ENCODE measurements at regions of chr5 and their contacts with region 1.

Region 1: GRCh38 chr5:96997265-96997859 is 61.5 kb downstream of the LNPEP start:
- DNase-seq: peak; percentile 32
- ATAC-seq: peak; percentile 82
- H3K4me3 ChIP-seq: no peak overlapping the region
- H3K27ac ChIP-seq: no peak overlapping the region
- H3K4me1 ChIP-seq: no peaks in the 10 kb centered on the region
- H3K27me3 ChIP-seq: no peaks in the 10 kb centered on the region
- CTCF ChIP-seq: peak; percentile 27 to 54 (median 39); a peak in 5 of 6 replicates
- POLR2A ChIP-seq: no peak
- RAD21 ChIP-seq: peak; percentile 49

Region 2: DNA sequence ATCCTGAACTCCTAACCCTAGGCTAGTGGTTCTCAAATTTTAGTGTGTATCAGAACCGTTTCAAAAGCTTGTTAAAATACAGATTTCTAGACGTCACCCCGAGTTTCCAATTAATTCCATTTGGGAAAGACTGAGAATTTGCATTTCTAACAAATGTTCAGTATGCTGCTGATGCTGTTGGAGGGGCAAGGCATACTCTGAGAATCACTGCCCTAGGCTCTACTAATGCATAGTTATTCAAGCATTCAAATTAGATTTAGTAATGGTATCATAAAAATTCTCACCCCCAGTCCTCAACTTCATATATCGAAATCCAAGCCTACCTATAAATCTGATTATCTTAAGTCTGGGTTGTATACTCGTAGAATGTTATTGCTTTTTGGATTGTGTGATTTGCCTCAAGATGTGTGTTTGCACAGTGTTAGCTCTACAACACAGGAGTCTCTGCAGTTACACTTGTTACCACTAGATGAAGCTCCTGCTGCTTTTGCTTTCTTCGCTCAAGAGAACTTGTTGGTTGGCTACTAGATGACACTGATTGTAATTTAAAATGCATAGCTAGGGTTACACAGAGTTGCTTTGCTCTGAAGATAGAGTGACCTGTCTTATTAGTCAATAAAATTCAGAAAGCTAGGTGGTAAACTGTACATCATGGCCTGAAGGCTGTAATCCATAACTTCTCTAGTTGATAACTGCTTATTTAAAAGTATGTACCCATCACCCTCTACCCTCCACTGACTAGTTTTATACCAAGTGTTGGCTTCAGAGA is 128.6 kb before region 1 on chr5:
- CTCF ChIA-PET with region 1: interaction called, 8 read pairs
- POLR2A ChIA-PET with region 1: no interaction called
- RAD21 ChIA-PET with region 1: interaction called, 4 to 5 read pairs
- intact Hi-C with region 1: loop called (anchors 5 kb)
- DNase-seq: peak; percentile 57
- ATAC-seq: peak; percentile 97
- H3K4me3 ChIP-seq: no peak overlapping the region
- H3K27ac ChIP-seq: no peak overlapping the region
- H3K4me1 ChIP-seq: no peaks in the 10 kb centered on the region
- H3K27me3 ChIP-seq: no peaks in the 10 kb centered on the region
- CTCF ChIP-seq: peak; percentile 76 to 95 (median 92)
- POLR2A ChIP-seq: no peak
- RAD21 ChIP-seq: peak; percentile 91

Region 3: GRCh38 chr5:96978812-96979449 is 18.4 kb before region 1 on chr5:
- CTCF ChIA-PET with region 1: interaction called, 11 read pairs
- POLR2A ChIA-PET with region 1: no interaction called
- RAD21 ChIA-PET with region 1: no interaction called
- intact Hi-C with region 1: no loop called
- DNase-seq: no peak
- ATAC-seq: no peak
- H3K4me3 ChIP-seq: no peak overlapping the region
- H3K27ac ChIP-seq: no peak overlapping the region
- H3K4me1 ChIP-seq: no peaks in the 10 kb centered on the region
- H3K27me3 ChIP-seq: no peaks in the 10 kb centered on the region
- CTCF ChIP-seq: no peak
- POLR2A ChIP-seq: no peak
- RAD21 ChIP-seq: no peak

Region 4: DNA sequence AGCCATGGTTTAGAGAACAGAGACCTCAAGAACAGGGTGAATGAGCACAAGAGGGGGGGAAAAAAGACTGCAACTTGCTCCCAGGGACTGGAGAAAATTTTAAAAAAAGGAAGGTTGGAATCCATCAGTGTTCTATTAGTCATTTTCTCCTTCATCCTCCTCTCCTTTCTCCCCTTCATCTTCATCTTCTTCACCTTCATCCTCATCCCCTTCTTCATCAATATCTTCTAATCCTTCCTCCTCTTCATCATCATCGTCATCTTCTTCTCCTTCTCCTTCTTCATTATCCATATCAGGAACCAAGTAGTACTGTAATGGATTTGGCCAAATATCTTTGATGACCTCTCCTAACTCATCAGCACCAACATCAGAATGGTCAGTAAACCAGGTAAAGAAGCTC is 58.9 kb after region 1 on chr5:
- CTCF ChIA-PET with region 1: no interaction called
- POLR2A ChIA-PET with region 1: no interaction called
- RAD21 ChIA-PET with region 1: no interaction called
- intact Hi-C with region 1: no loop called
- DNase-seq: no peak
- ATAC-seq: no peak
- H3K4me3 ChIP-seq: no peak overlapping the region
- H3K27ac ChIP-seq: no peak overlapping the region
- H3K4me1 ChIP-seq: no peaks in the 10 kb centered on the region
- H3K27me3 ChIP-seq: no peaks in the 10 kb centered on the region
- CTCF ChIP-seq: no peak
- POLR2A ChIP-seq: no peak
- RAD21 ChIP-seq: no peak

Region 5: DNA sequence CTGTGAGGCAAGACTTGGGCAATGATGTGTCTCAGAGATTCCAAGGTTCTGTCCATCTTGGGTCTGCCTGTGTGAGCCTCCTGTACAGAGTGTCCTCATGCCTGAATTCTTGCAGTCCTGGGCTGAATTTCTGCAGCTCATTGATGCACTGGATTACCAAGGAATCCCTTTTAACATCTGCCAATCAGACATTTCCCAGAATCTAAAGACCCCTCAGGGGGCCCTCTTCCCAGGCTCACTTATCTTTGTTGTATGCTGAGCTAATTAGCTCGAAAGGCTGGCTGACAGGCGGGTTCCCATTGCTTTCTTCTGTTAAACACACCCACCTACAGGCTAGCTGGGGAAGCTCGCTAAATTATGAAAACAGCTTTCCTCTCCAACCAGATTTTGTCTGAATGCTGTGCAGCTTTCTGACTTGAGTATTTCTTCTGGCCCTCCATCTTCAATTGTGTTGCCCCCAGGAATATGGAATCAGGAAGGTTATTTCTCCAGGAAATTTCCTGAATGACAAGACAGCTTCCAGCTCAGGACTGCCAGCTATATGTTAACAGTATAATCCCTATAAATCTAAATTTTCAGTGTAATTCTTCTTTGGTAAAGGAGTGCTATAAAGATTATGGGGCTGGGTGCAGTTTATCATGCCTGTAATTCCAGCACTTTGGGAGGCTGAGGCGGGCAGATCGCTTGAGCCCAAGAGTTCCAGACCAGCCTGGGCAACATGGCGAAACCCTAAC is 145.3 kb after region 1 on chr5 and contains the start of gene LIX1:
- CTCF ChIA-PET with region 1: interaction called, 35 read pairs
- POLR2A ChIA-PET with region 1: no interaction called
- RAD21 ChIA-PET with region 1: interaction called, 3 to 5 read pairs
- intact Hi-C with region 1: loop called (anchors 5 kb)
- DNase-seq: no peak
- ATAC-seq: peak; percentile 90
- H3K4me3 ChIP-seq: no peak within 1 kb of the TSS
- H3K27ac ChIP-seq: no peak within 1 kb of the TSS
- H3K4me1 ChIP-seq: no peaks in the 10 kb centered on the region
- H3K27me3 ChIP-seq: no peaks in the 10 kb centered on the region
- CTCF ChIP-seq: peak; percentile 55 to 66 (median 63); a peak in 5 of 6 replicates
- POLR2A ChIP-seq: no peak
- RAD21 ChIP-seq: peak; percentile 81
- total RNA-seq, gene LIX1: not detected

Region 6: DNA sequence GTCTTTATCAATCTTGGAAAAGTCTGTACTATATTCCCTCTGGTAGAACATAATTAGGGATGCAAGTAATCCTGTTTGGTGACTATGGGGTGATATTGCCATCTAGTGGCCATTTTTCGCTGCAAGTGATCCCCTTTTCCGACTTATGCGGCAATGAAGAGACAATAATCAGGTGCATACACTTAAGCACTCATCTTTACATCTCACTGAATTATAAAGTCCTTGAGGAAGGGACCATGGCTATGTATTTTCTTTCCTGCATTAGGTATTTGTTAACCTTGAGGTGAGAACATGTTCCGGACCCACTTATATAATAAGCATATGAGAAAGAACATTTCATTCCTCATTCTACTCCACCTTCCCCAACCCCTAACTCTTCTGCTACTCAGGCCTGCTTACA is 164.7 kb after region 1 on chr5:
- CTCF ChIA-PET with region 1: interaction called, 15 read pairs
- POLR2A ChIA-PET with region 1: no interaction called
- RAD21 ChIA-PET with region 1: interaction called in 1 of 2 experiments, 3 read pairs
- intact Hi-C with region 1: loop called (anchors 5 kb)
- DNase-seq: peak; percentile 79
- ATAC-seq: peak; percentile 77
- H3K4me3 ChIP-seq: no peak overlapping the region
- H3K27ac ChIP-seq: no peak overlapping the region
- H3K4me1 ChIP-seq: peaks cover 7 to 9% of the 10 kb centered on the region in 2 experiments; a peak in 3 of 4 replicates
- H3K27me3 ChIP-seq: no peaks in the 10 kb centered on the region
- CTCF ChIP-seq: peak; percentile 67 to 95 (median 81)
- POLR2A ChIP-seq: no peak
- RAD21 ChIP-seq: peak; percentile 85

Region 7: DNA sequence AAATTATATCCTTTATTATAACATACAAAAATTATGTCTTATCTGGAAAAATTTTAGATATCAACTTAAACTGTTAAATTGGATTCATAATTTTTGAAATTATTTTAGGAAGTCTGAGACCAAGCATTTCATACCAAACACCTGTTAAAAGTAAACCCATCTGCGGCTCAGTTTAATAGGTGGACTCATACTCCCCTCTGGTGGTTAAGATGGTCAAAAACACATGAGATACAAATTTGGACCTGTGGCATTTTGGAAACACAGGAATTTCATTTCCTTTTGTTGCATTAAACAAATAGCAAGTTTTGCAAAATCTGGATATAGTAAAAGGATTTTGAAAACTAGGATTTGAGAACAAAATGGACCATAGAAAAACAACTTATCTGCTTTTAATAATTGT is 1829.8 kb after region 1 on chr5:
- CTCF ChIA-PET with region 1: no interaction called
- POLR2A ChIA-PET with region 1: no interaction called
- RAD21 ChIA-PET with region 1: no interaction called
- intact Hi-C with region 1: loop called (anchors 5 kb)
- DNase-seq: peak; percentile 45
- ATAC-seq: peak; percentile 73
- H3K4me3 ChIP-seq: no peak overlapping the region
- H3K27ac ChIP-seq: no peak overlapping the region
- H3K4me1 ChIP-seq: no peaks in the 10 kb centered on the region
- H3K27me3 ChIP-seq: no peaks in the 10 kb centered on the region
- CTCF ChIP-seq: peak; percentile 28 to 65 (median 58); a peak in 5 of 6 replicates
- POLR2A ChIP-seq: no peak
- RAD21 ChIP-seq: peak; percentile 78

Measured in HCT116 (cell line).